ENCODE measurements at regions of chr1 and their contacts with region 1.

Region 1: DNA sequence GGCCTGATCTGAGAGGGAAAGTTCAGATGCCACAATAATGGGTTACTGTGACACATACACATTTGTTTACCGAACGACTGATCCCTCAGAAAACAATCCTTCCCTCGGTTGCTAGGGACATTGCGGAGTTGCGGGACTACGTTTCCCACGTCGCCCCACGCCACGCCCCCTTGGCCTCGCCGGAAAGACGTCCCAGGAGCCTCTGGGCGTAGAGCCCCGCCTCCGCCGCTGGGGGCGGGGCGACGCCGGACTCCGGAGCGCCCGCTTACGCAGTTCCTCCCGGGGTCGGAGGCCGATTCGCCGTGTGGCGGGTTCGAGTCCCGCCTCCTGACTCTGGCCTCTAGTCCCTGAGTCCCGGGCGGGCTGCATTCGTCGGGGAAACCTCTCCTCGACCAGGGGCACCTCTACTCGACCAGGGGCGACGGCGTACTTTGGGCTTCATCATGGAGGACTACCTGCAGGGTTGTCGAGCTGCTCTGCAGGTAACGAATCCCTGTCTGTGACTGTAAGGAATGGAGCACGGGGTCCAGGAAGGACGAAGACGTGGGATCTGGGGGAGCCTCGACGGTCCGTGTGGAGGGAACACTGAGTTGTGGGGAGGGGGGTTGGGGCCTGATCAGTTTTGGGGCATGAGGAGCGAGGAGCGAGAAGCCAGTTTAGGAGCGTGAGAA is at the start of gene PRUNE1:
- DNase-seq: peak; percentile 99 to 100
- ATAC-seq: peak; percentile 97
- H3K4me3 ChIP-seq: peak within 1 kb of the TSS; percentile 27 to 42
- H3K27ac ChIP-seq: peak within 1 kb of the TSS in 1 of 2 donors; percentile 90
- H3K4me1 ChIP-seq: peaks cover 0 to 3% of the 10 kb centered on the region in 2 donors
- H3K27me3 ChIP-seq: no peaks in the 10 kb centered on the region
- total RNA-seq, gene PRUNE1: 14.8 TPM

Region 2: DNA sequence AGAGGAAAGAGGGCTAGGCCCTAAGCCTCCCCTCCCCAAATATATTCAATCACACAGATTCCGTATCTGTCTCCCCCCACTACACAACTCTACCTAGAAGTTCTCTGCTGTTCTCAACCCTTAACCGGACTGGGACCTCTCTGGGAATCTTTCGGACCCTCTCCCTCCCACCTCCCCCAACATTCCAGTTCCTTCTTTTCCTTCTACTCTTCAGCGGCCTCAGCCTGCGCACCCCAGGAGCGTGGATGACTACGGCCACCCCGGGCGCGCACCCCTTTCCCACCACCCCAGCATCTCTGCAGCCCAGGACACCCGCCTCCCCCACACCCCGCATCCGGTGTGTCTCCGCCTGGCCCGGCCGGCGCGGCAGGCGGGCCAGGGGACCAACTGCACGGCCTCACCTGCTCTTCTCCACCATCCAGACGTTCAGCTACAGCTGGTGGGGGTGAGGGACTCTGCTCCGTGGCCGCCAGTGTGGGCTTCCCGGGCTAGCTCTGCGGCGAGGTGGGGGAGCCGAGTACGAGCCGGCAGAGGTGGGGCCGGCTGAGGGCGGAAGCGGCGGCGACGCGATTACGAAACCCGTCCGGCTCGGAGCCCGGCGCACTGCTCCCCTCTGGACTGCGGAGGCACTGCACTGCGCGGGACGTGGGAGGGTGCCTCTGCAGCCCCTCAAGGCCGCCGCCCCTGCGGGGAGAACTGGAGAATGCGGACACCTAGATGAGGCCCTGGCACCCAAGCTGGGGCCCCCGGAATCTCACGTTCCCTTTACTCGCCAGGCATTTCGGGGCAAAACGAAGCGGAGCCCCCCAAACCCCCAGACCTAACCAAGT is 51.0 kb after region 1 on chr1 and contains the start of gene CDC42SE1:
- intact Hi-C with region 1: loop called in 1 of 2 experiments (anchors 5 kb)
- DNase-seq: peak; percentile 92 to 96
- ATAC-seq: peak; percentile 96
- H3K4me3 ChIP-seq: peak within 1 kb of the TSS; percentile 80 to 92
- H3K27ac ChIP-seq: peak within 1 kb of the TSS; percentile 19 to 20
- H3K4me1 ChIP-seq: peaks cover 0 to 4% of the 10 kb centered on the region in 2 donors
- H3K27me3 ChIP-seq: no peaks in the 10 kb centered on the region
- total RNA-seq, gene CDC42SE1: 102 TPM